GM12878 (cell line): ENCODE measurements at regions of chr1 and their contacts with region 1.

Region 1: GRCh38 chr1:207863893-207864535 is 46.9 kb downstream of the CD34 start:
- DNase-seq: peak; percentile 70
- ATAC-seq: peak; percentile 80
- H3K4me3 ChIP-seq: peak overlapping the region; percentile 17; the same call in 1 of the 2 replicates
- H3K27ac ChIP-seq: peak overlapping the region; percentile 38
- H3K4me1 ChIP-seq: peaks cover 48% of the 10 kb centered on the region
- H3K27me3 ChIP-seq: no peaks in the 10 kb centered on the region
- CTCF ChIP-seq: peak; percentile 13 to 38 (median 30); a peak in 2 of 6 replicates
- EP300 ChIP-seq: 0 out of 4 replicates have a peak, but pooled peaks of 1 of the 2 experiments have one; percentile 19
- POLR2A ChIP-seq: peak; percentile 51
- RAD21 ChIP-seq: 0 out of 2 replicates have a peak, but pooled peaks have one; percentile 21

Region 2: GRCh38 chr1:207751790-207752455 is 112.1 kb before region 1 on chr1 and contains the start of gene CD46:
- CTCF ChIA-PET with region 1: no interaction called
- POLR2A ChIA-PET with region 1: no interaction called
- RAD21 ChIA-PET with region 1: no interaction called
- SMC1A ChIA-PET with region 1: interaction called, 3 read pairs
- in situ Hi-C with region 1: no loop called
- intact Hi-C with region 1: loop called (anchors 5 kb)
- DNase-seq: peak; percentile 81
- ATAC-seq: peak; percentile 96
- H3K4me3 ChIP-seq: peak within 1 kb of the TSS; percentile 84
- H3K27ac ChIP-seq: peak within 1 kb of the TSS; percentile 86
- H3K4me1 ChIP-seq: peaks cover 11% of the 10 kb centered on the region
- H3K27me3 ChIP-seq: no peaks in the 10 kb centered on the region
- CTCF ChIP-seq: no peak
- EP300 ChIP-seq: no peak
- POLR2A ChIP-seq: peak; percentile 81
- RAD21 ChIP-seq: no peak
- polyA plus RNA-seq, gene CD46: 61.1 to 62.7 TPM

Region 3: GRCh38 chr1:207848234-207848633 is 15.8 kb before region 1 on chr1:
- CTCF ChIA-PET with region 1: interaction called, 821 read pairs
- POLR2A ChIA-PET with region 1: interaction called, 7 read pairs
- RAD21 ChIA-PET with region 1: interaction called, 3 read pairs
- SMC1A ChIA-PET with region 1: interaction called, 13 read pairs
- in situ Hi-C with region 1: no loop called
- intact Hi-C with region 1: no loop called
- DNase-seq: no peak
- ATAC-seq: peak; percentile 85
- H3K4me3 ChIP-seq: no peak overlapping the region
- H3K27ac ChIP-seq: 0 out of 2 replicates have a peak overlapping the region, but pooled peaks have one; percentile 27
- H3K4me1 ChIP-seq: peaks cover 3% of the 10 kb centered on the region; the same call in 1 of the 2 replicates
- H3K27me3 ChIP-seq: no peaks in the 10 kb centered on the region
- CTCF ChIP-seq: no peak
- EP300 ChIP-seq: no peak
- POLR2A ChIP-seq: no peak
- RAD21 ChIP-seq: no peak

Region 4: DNA sequence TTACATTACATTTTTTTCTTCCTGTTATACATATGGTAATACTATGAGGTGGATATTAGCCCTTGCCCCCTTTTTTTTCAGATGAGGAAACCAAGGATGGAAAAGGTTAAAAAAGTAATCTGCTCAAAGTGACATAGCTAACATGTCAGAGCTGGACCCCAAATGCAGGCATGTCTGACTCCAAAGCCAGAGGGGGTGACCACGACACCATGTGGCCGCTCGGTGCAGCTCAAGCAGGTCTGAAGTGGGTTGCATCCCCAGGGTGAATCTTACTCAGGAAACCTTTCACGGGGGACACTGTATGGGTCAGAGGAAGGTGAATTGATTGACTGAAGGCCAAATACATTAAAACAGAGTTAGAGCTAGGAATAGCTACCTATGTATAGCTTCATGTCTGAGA is 12.1 kb after region 1 on chr1:
- CTCF ChIA-PET with region 1: interaction called, 244 read pairs
- POLR2A ChIA-PET with region 1: interaction called, 10 read pairs
- RAD21 ChIA-PET with region 1: interaction called, 8 read pairs
- SMC1A ChIA-PET with region 1: interaction called, 44 read pairs
- in situ Hi-C with region 1: no loop called
- intact Hi-C with region 1: no loop called
- DNase-seq: no peak
- ATAC-seq: peak; percentile 45; the same call in 2 of the 3 replicates
- H3K4me3 ChIP-seq: no peak overlapping the region
- H3K27ac ChIP-seq: no peak overlapping the region
- H3K4me1 ChIP-seq: peaks cover 20% of the 10 kb centered on the region
- H3K27me3 ChIP-seq: no peaks in the 10 kb centered on the region
- CTCF ChIP-seq: peak in 2 of 3 experiments; percentile 21 to 38; a peak in 3 of 6 replicates
- EP300 ChIP-seq: no peak
- POLR2A ChIP-seq: no peak
- RAD21 ChIP-seq: peak; percentile 46